ENCODE measurements at regions of chr6 and their contacts with region 1.

Region 1: DNA sequence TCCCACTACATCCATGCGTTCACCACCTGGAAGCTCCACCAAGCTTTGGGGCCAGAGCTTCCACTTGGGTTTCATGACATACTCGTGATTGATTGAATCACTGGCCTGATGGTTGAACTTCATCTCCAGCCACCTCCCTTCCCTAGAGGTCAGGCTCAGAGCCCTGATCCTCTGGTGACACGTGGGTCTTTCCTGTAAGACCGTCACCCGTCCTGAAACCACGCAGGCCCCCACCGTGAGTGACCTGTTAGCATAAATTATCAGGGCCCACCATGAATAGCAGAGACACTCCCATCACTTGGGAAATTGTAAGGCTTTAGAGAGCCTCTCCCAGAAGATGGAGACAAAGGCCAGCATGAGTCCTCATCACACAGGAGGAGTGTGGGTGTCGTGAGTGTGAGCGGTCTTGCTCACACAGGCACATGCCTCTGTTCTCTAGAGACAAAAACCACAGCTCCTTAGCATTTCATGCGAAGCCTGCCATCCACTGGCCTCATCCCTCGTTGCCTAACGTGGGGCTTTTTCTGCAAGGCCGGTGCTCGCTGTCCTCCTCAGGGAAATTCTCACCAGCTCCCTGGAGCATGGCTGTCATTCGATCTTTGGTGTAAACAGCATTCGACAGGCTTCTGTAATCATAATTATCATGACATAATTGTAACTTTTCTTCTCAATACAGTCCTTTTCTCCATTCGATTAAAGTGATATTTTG is 65.1 kb upstream of the DUSP22 start:
- DNase-seq: peak; percentile 60
- H3K4me3 Mint-ChIP-seq: no peak overlapping the region
- H3K27ac Mint-ChIP-seq: peak overlapping the region; percentile 95
- H3K4me1 Mint-ChIP-seq: peaks cover 65% of the 10 kb centered on the region
- H3K27me3 Mint-ChIP-seq: no peaks in the 10 kb centered on the region

Region 2: GRCh38 chr6:195861-196360 is 31.3 kb before region 1 on chr6:
- CTCF ChIA-PET with region 1: interaction called, 72 read pairs
- intact Hi-C with region 1: loop called (anchors 1 kb)
- DNase-seq: peak; percentile 89
- H3K4me3 Mint-ChIP-seq: no peak overlapping the region
- H3K27ac Mint-ChIP-seq: peak overlapping the region; percentile 64
- H3K4me1 Mint-ChIP-seq: peaks cover 50% of the 10 kb centered on the region
- H3K27me3 Mint-ChIP-seq: no peaks in the 10 kb centered on the region

Region 3: GRCh38 chr6:217048-217659 is 10.1 kb before region 1 on chr6:
- CTCF ChIA-PET with region 1: interaction called, 25 read pairs
- intact Hi-C with region 1: loop called (anchors 1 kb)
- DNase-seq: peak; percentile 54
- H3K4me3 Mint-ChIP-seq: no peak overlapping the region
- H3K27ac Mint-ChIP-seq: no peak overlapping the region
- H3K4me1 Mint-ChIP-seq: peaks cover 53% of the 10 kb centered on the region
- H3K27me3 Mint-ChIP-seq: peaks cover 4% of the 10 kb centered on the region

Region 4: GRCh38 chr6:251920-252319 is 24.7 kb after region 1 on chr6:
- CTCF ChIA-PET with region 1: interaction called, 5 read pairs
- intact Hi-C with region 1: loop called (anchors 1 kb)
- DNase-seq: no peak
- H3K4me3 Mint-ChIP-seq: no peak overlapping the region
- H3K27ac Mint-ChIP-seq: peak overlapping the region; percentile 63
- H3K4me1 Mint-ChIP-seq: peaks cover 43% of the 10 kb centered on the region
- H3K27me3 Mint-ChIP-seq: no peaks in the 10 kb centered on the region

Region 5: GRCh38 chr6:319177-320131 is 92.2 kb after region 1 on chr6:
- CTCF ChIA-PET with region 1: no interaction called
- intact Hi-C with region 1: no loop called
- DNase-seq: no peak
- H3K4me3 Mint-ChIP-seq: no peak overlapping the region
- H3K27ac Mint-ChIP-seq: no peak overlapping the region
- H3K4me1 Mint-ChIP-seq: peaks cover 26% of the 10 kb centered on the region
- H3K27me3 Mint-ChIP-seq: no peaks in the 10 kb centered on the region

Region 6: GRCh38 chr6:336159-337019 is 109.2 kb after region 1 on chr6:
- CTCF ChIA-PET with region 1: no interaction called
- intact Hi-C with region 1: loop called (anchors 2 kb)
- DNase-seq: no peak
- H3K4me3 Mint-ChIP-seq: no peak overlapping the region
- H3K27ac Mint-ChIP-seq: no peak overlapping the region
- H3K4me1 Mint-ChIP-seq: peaks cover 40% of the 10 kb centered on the region
- H3K27me3 Mint-ChIP-seq: no peaks in the 10 kb centered on the region

Region 7: DNA sequence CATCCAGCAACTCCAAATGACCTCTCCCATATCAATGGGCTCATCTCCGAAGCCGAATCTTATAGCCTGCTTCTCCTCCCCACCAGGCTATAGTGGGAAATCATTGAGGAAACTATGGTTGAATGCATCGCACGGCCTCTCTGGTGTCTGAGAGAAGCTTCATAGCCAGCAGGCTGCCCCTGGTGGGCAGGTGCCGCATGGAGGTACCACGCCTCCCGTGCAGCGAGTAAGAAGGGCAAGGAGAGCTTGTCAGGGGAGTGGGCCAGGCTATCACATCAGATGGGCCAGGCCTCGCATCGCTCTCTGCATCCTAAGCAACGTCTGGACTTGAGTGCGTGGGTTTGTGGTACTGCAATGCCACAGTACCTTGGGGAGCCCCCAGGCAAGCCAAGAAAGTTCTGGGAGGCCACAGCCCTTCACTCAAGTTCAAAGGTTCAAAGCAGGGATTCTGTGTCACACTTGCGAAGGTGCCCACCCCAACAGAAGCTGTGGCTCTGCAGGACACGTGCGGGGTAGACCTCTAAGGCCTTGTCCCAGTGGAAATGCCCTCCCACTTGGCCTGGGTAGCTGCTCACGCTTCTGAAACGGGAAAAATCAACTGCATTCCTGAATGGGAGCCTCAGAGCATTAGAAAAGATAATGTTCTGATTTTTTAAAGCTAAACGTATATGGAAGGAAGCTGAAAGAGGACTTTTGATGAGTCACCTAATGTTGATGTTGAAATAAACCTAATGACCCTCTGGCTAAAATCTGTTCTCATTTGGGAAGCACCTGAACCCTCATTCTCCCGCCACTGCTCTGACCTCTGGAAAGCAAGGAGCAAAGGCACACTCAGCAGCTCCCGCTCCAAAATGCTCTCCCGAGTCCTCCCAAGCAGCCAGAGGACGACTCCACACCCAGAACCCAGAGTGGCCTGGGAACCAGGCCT is 155.9 kb after region 1 on chr6:
- CTCF ChIA-PET with region 1: no interaction called
- intact Hi-C with region 1: no loop called
- DNase-seq: no peak
- H3K4me3 Mint-ChIP-seq: no peak overlapping the region
- H3K27ac Mint-ChIP-seq: no peak overlapping the region
- H3K4me1 Mint-ChIP-seq: peaks cover 8% of the 10 kb centered on the region
- H3K27me3 Mint-ChIP-seq: peaks cover 32% of the 10 kb centered on the region

Region 8: GRCh38 chr6:551405-551804 is 324.2 kb after region 1 on chr6:
- CTCF ChIA-PET with region 1: no interaction called
- intact Hi-C with region 1: loop called (anchors 2 kb)
- DNase-seq: peak; percentile 56
- H3K4me3 Mint-ChIP-seq: no peak overlapping the region
- H3K27ac Mint-ChIP-seq: peak overlapping the region; percentile 79
- H3K4me1 Mint-ChIP-seq: peaks cover 57% of the 10 kb centered on the region
- H3K27me3 Mint-ChIP-seq: no peaks in the 10 kb centered on the region

Region 9: DNA sequence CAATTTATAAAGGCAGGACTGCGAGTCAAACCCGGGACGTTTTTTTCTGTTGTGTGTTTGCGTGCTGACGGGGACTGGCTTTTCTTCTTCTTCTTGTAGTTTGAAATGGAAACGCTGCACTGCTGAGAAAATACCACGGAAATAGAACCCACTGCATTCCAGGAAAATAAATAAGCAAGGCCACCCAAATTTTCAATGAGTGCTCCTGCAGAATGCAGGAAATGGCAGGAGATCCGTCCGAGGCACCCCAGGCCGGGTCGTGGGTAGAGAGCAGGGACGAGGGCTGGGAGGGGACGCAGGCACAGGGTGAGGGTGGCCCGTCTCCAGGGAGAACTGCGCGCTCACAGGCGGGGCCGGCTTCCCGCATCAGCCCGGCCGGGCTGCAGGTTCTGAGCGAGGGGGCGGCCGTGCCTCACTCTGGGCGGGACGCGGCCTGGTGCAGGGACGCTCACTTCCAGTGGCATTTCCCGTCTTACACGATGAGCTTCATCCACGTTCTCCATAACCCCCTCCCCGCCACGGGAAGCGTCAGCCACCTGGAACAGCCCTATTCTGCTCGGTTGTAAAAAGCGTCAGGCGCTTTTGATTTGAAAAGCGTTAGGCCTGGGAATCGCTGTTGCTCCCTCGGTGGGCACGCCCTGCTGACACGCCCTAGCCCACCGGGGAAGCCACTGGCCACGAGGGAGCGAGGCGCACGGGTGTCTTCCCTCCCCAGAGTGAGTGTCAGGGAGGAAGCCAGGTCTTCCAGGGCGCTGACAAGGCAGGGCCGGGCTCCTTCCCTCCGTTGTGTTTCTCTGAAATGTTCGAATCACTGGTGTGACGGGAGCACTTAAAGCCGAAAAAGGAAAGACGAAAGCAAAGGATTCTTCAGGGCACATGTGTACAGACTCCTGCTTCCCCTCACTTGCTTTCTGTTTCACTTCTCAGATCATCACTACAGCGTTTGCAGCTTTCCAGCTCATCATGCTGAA is 483.7 kb after region 1 on chr6:
- CTCF ChIA-PET with region 1: no interaction called
- intact Hi-C with region 1: loop called (anchors 2 kb)
- DNase-seq: peak; percentile 64
- H3K4me3 Mint-ChIP-seq: peak overlapping the region; percentile 89
- H3K27ac Mint-ChIP-seq: peak overlapping the region; percentile 92
- H3K4me1 Mint-ChIP-seq: peaks cover 21% of the 10 kb centered on the region
- H3K27me3 Mint-ChIP-seq: peaks cover 4% of the 10 kb centered on the region

Region 10: DNA sequence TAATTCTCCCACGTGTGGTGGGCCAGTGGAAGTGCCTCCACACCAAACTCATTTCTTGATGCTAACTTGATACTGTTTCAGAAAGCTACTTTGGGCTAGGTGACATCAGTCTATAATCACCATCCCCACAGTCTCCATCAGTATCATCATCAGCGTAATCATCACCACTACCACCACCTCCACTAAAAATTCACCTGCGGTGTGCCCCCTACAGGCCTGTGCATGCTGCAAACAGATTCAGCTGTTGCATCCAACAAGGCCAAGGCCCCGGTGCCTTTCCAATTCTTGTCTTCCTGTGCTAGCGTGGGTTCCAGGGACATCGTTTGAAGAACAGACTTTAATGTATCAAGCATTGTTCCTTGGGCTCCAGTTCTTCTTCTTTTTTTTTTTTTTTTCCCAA is 667.0 kb after region 1 on chr6:
- CTCF ChIA-PET with region 1: no interaction called
- intact Hi-C with region 1: no loop called
- DNase-seq: peak; percentile 43
- H3K4me3 Mint-ChIP-seq: no peak overlapping the region
- H3K27ac Mint-ChIP-seq: no peak overlapping the region
- H3K4me1 Mint-ChIP-seq: no peaks in the 10 kb centered on the region
- H3K27me3 Mint-ChIP-seq: peaks cover 8% of the 10 kb centered on the region

Measured in activated naive CD4-positive, alpha-beta T cell treated with anti-CD3 and anti-CD28 coated beads for 36 hours (primary cell).